GM12878 (cell line): ENCODE measurements at regions of chr9 and their contacts with region 1.

Region 1: DNA sequence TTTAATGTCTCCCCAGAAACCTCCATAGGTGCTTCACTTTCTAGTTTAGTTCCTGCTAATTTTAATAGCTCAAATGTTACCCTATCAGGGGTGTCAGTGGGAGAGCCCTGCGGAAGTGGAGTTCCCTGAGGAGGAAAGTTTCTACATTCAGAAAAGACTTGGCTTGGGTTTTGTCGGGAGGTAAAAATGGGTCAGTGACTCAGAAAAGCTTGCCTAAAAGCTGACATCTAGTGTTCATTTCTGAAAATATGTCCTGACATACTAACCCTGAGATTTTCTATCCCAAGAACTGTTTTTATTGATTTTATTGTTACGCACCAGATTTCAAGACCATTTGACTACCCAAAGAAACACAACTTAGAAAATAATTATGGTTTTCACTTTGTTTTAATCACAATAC is 40.9 kb upstream of the GLDC start:
- DNase-seq: no peak
- ATAC-seq: no peak
- H3K4me3 ChIP-seq: no peak overlapping the region
- H3K27ac ChIP-seq: peak overlapping the region; percentile 65
- H3K4me1 ChIP-seq: peaks cover 40% of the 10 kb centered on the region
- H3K27me3 ChIP-seq: no peaks in the 10 kb centered on the region
- CTCF ChIP-seq: peak; percentile 24 to 57 (median 43); a peak in 3 of 6 replicates
- EP300 ChIP-seq: no peak
- POLR2A ChIP-seq: no peak
- RAD21 ChIP-seq: peak; percentile 64

Region 2: GRCh38 chr9:6353851-6354686 is 332.3 kb before region 1 on chr9:
- CTCF ChIA-PET with region 1: interaction called, 6 read pairs
- POLR2A ChIA-PET with region 1: interaction called, 6 read pairs
- RAD21 ChIA-PET with region 1: interaction called, 12 read pairs
- SMC1A ChIA-PET with region 1: interaction called, 5 read pairs
- in situ Hi-C with region 1: no loop called
- intact Hi-C with region 1: loop called (anchors 5 kb)
- DNase-seq: peak; percentile 45
- ATAC-seq: peak; percentile 95
- H3K4me3 ChIP-seq: no peak overlapping the region
- H3K27ac ChIP-seq: no peak overlapping the region
- H3K4me1 ChIP-seq: peaks cover 15% of the 10 kb centered on the region
- H3K27me3 ChIP-seq: no peaks in the 10 kb centered on the region
- CTCF ChIP-seq: peak; percentile 68 to 74 (median 74); a peak in 5 of 6 replicates
- EP300 ChIP-seq: no peak
- POLR2A ChIP-seq: no peak
- RAD21 ChIP-seq: peak; percentile 85

Region 3: GRCh38 chr9:6498982-6499381 is 187.4 kb before region 1 on chr9:
- CTCF ChIA-PET with region 1: no interaction called
- POLR2A ChIA-PET with region 1: no interaction called
- RAD21 ChIA-PET with region 1: no interaction called
- SMC1A ChIA-PET with region 1: no interaction called
- in situ Hi-C with region 1: no loop called
- intact Hi-C with region 1: no loop called
- DNase-seq: no peak
- ATAC-seq: no peak
- H3K4me3 ChIP-seq: no peak overlapping the region
- H3K27ac ChIP-seq: no peak overlapping the region
- H3K4me1 ChIP-seq: no peaks in the 10 kb centered on the region
- H3K27me3 ChIP-seq: no peaks in the 10 kb centered on the region
- CTCF ChIP-seq: no peak
- EP300 ChIP-seq: no peak
- POLR2A ChIP-seq: no peak
- RAD21 ChIP-seq: no peak

Region 4: GRCh38 chr9:6584881-6585597 is 101.4 kb before region 1 on chr9:
- CTCF ChIA-PET with region 1: interaction called, 56 read pairs
- POLR2A ChIA-PET with region 1: interaction called, 3 read pairs
- RAD21 ChIA-PET with region 1: interaction called, 17 read pairs
- SMC1A ChIA-PET with region 1: interaction called, 40 read pairs
- in situ Hi-C with region 1: no loop called
- intact Hi-C with region 1: loop called (anchors 1 kb)
- DNase-seq: no peak
- ATAC-seq: peak; percentile 85
- H3K4me3 ChIP-seq: no peak overlapping the region
- H3K27ac ChIP-seq: no peak overlapping the region
- H3K4me1 ChIP-seq: no peaks in the 10 kb centered on the region
- H3K27me3 ChIP-seq: no peaks in the 10 kb centered on the region
- CTCF ChIP-seq: peak in 2 of 3 experiments; percentile 13 to 35; a peak in 3 of 6 replicates
- EP300 ChIP-seq: no peak
- POLR2A ChIP-seq: no peak
- RAD21 ChIP-seq: peak; percentile 42; the same call in 1 of the 2 replicates

Region 5: GRCh38 chr9:6640268-6641072 is 45.9 kb before region 1 on chr9:
- CTCF ChIA-PET with region 1: interaction called, 5 read pairs
- POLR2A ChIA-PET with region 1: interaction called, 17 read pairs
- RAD21 ChIA-PET with region 1: interaction called, 6 read pairs
- SMC1A ChIA-PET with region 1: interaction called, 11 read pairs
- in situ Hi-C with region 1: no loop called
- intact Hi-C with region 1: no loop called
- DNase-seq: no peak
- ATAC-seq: no peak
- H3K4me3 ChIP-seq: no peak overlapping the region
- H3K27ac ChIP-seq: no peak overlapping the region
- H3K4me1 ChIP-seq: peaks cover 7% of the 10 kb centered on the region; the same call in 1 of the 2 replicates
- H3K27me3 ChIP-seq: no peaks in the 10 kb centered on the region
- CTCF ChIP-seq: no peak
- EP300 ChIP-seq: no peak
- POLR2A ChIP-seq: no peak
- RAD21 ChIP-seq: no peak

Region 6: DNA sequence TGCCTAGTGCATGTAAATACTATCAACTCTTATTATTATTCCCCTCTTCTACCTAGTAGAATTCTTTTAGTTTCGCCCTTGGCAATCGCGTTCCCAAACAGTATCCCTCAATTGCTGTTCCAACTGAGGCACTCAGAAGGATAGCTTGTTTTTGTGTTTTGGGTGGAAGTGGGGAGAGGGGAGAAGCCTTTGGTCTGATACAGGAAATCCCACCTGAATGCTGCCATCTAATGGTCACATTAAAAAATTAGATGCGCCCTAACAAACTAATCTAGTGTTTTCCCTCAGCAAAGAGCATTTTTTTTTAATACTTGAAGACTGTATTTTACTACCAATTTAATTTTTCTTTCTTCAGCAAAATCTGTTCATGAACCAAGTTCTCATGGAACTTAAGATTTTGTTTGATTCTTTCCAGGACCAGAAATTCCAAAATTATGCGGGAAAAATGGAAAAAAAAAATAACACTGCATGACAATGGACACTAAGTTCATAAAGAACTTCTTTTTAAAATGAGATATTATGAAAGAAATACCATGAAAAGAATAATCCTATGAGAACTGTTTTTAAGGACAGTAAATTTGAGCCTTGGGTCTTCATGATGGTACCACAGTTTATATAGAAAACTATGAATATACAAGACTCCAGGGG is 18.6 kb before region 1 on chr9:
- CTCF ChIA-PET with region 1: interaction called, 35 read pairs
- POLR2A ChIA-PET with region 1: interaction called, 28 read pairs
- RAD21 ChIA-PET with region 1: interaction called, 14 read pairs
- SMC1A ChIA-PET with region 1: interaction called, 10 read pairs
- in situ Hi-C with region 1: no loop called
- intact Hi-C with region 1: no loop called
- DNase-seq: no peak
- ATAC-seq: peak; percentile 77
- H3K4me3 ChIP-seq: no peak overlapping the region
- H3K27ac ChIP-seq: no peak overlapping the region
- H3K4me1 ChIP-seq: no peaks in the 10 kb centered on the region; the same call in 1 of the 2 replicates
- H3K27me3 ChIP-seq: no peaks in the 10 kb centered on the region
- CTCF ChIP-seq: peak; percentile 30 to 64 (median 64); a peak in 5 of 6 replicates
- EP300 ChIP-seq: no peak
- POLR2A ChIP-seq: no peak
- RAD21 ChIP-seq: peak; percentile 75

Region 7: GRCh38 chr9:6703898-6704639 is 17.7 kb after region 1 on chr9:
- CTCF ChIA-PET with region 1: interaction called, 8 read pairs
- POLR2A ChIA-PET with region 1: interaction called, 43 read pairs
- RAD21 ChIA-PET with region 1: interaction called, 6 read pairs
- SMC1A ChIA-PET with region 1: interaction called, 8 read pairs
- in situ Hi-C with region 1: no loop called
- intact Hi-C with region 1: no loop called
- DNase-seq: no peak
- ATAC-seq: peak; percentile 93
- H3K4me3 ChIP-seq: peak overlapping the region; percentile 78
- H3K27ac ChIP-seq: peak overlapping the region; percentile 86
- H3K4me1 ChIP-seq: peaks cover 11% of the 10 kb centered on the region
- H3K27me3 ChIP-seq: no peaks in the 10 kb centered on the region
- CTCF ChIP-seq: no peak
- EP300 ChIP-seq: no peak
- POLR2A ChIP-seq: peak; percentile 96
- RAD21 ChIP-seq: no peak

Region 8: DNA sequence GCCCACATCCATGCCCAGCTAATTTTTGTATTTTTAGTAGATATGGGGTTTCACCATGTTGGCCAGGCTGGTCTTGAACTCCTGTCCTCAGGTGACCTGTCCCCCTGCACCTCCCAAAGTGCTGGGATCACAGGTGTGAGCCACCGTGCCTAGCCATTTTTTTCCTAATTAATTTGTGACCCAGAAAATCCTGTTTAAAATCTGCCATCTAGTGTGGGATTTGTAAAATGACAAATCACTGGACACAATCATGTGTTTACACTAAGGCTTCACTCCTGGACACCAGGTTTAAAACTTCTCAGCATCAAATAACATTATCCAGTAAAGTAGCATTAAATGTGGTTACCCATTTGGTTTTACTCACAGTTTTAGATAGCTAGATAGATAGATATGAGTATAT is 52.8 kb after region 1 on chr9:
- CTCF ChIA-PET with region 1: interaction called, 19 read pairs
- POLR2A ChIA-PET with region 1: no interaction called
- RAD21 ChIA-PET with region 1: interaction called, 3 read pairs
- SMC1A ChIA-PET with region 1: interaction called, 11 read pairs
- in situ Hi-C with region 1: no loop called
- intact Hi-C with region 1: no loop called
- DNase-seq: no peak
- ATAC-seq: peak; percentile 59
- H3K4me3 ChIP-seq: no peak overlapping the region
- H3K27ac ChIP-seq: no peak overlapping the region
- H3K4me1 ChIP-seq: no peaks in the 10 kb centered on the region
- H3K27me3 ChIP-seq: no peaks in the 10 kb centered on the region
- CTCF ChIP-seq: peak; percentile 8 to 46 (median 36); a peak in 4 of 6 replicates
- EP300 ChIP-seq: no peak
- POLR2A ChIP-seq: no peak
- RAD21 ChIP-seq: peak; percentile 57